ENCODE measurements at regions of chr3 and their contacts with region 1.

Region 1: GRCh38 chr3:142279965-142280590 is 54.7 kb upstream of the GK5 start:
- DNase-seq: peak; percentile 38
- H3K4me3 ChIP-seq: no peak overlapping the region
- H3K27ac ChIP-seq: no peak overlapping the region
- H3K4me1 ChIP-seq: no peaks in the 10 kb centered on the region
- H3K27me3 ChIP-seq: no peaks in the 10 kb centered on the region
- CTCF ChIP-seq: peak; percentile 59 to 78 (median 61)
- EP300 ChIP-seq: no peak
- POLR2A ChIP-seq: no peak

Region 2: DNA sequence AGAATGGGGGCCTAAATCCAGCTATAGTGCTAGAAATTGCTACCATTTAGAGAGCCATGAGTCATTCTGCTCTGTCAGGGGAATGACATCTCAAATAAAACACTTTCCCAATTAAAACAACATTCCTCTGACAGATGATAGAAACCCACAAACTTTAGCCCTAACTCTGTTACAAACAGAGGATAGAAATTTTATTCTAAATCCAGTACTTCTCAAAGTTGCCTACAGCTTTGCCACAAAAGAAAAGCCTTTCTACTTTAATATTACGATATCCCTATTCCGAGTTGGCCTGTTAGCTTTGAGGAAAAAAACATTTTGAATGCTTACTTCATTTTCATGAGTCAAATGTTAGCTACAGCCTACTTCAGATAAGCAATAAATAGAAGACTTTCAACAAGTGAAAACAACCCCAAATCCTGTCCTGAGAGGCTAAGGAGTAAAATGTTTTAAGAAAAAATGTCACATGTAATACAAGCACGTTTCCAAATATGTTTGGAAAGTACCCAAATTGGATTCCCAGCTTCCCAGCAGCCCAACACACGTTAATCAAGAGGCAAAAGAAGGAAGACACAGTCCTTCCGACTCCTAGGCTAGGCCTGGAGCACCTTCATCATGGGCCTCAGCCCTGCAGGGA is 320.0 kb before region 1 on chr3:
- in situ Hi-C with region 1: loop called in 1 of 4 experiments (anchors 10 kb)
- intact Hi-C with region 1: loop called (anchors 10 kb)
- DNase-seq: no peak
- H3K4me3 ChIP-seq: no peak overlapping the region
- H3K27ac ChIP-seq: peak overlapping the region; percentile 33 to 52 (median 42)
- H3K4me1 ChIP-seq: peaks cover 0 to 7% (median 0%) of the 10 kb centered on the region in 4 donors
- H3K27me3 ChIP-seq: no peaks in the 10 kb centered on the region
- CTCF ChIP-seq: no peak
- EP300 ChIP-seq: no peak
- POLR2A ChIP-seq: no peak

Region 3: GRCh38 chr3:142065344-142065743 is 214.7 kb before region 1 on chr3:
- in situ Hi-C with region 1: no loop called
- intact Hi-C with region 1: no loop called
- DNase-seq: no peak
- H3K4me3 ChIP-seq: no peak overlapping the region
- H3K27ac ChIP-seq: no peak overlapping the region
- H3K4me1 ChIP-seq: peaks cover 0 to 3% (median 0%) of the 10 kb centered on the region in 4 donors
- H3K27me3 ChIP-seq: no peaks in the 10 kb centered on the region
- CTCF ChIP-seq: no peak
- EP300 ChIP-seq: no peak
- POLR2A ChIP-seq: no peak

Region 4: DNA sequence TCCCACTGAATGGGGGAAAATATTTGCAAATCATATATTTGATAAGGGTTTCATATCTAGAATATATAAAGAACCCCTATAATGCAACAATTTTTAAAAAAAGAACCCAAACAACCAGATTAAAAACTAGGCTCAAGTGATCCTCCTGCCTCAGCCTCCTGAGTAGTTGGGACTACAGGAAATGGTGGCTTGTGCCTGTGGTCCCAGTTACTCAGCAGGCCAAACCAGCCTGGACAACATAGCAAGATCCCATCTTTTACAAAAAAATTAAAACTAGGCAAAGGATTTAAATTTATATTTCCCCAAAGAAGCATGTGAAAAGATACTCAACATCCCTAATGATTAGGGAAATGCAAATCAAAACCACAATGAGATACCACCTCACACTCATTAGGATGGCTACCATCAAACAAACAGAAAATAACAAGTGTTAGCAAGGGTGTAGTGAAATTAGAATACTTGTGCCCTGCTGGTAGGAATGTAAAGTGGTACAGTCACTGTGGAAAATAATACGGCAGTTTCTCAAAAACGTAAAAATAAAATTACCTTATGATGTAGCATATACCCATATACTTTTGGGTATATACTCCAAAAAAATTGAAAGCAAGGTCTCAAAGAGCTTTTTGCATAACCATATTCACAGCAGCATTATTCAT is 150.4 kb before region 1 on chr3:
- in situ Hi-C with region 1: loop called in 3 of 4 experiments (anchors 10 kb)
- intact Hi-C with region 1: loop called (anchors 10 kb)
- DNase-seq: no peak
- H3K4me3 ChIP-seq: no peak overlapping the region
- H3K27ac ChIP-seq: no peak overlapping the region
- H3K4me1 ChIP-seq: peaks cover 0 to 7% (median 3%) of the 10 kb centered on the region in 4 donors
- H3K27me3 ChIP-seq: no peaks in the 10 kb centered on the region
- CTCF ChIP-seq: peak in 1 of 5 experiments; percentile 8
- EP300 ChIP-seq: no peak
- POLR2A ChIP-seq: no peak

Region 5: DNA sequence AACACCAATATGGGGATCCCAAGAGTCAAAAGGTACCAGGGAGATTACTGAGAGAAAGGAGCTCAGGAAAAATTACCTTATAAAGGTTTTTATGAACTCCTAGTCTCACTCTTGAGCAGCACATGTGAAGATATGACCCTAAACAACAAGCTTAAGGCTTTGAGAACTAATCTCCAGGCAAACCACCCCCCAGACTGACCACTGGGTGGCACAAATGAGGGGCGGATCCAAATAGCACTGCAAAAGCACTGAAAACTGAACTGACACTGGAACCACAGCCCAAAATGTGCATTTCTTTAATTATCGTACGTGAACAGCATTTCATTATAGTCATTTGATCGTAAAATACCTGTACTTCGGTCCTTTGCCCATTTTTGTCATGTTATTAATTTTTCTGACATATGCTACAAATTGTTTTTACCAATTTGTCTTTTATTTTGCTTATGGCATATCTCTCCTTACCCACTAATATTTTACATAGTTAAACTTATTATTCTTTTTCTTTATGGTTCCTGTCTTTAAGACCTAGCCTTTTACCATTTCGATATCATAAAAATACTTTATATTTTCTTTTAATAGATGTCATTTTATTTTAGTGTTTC is 99.2 kb before region 1 on chr3:
- in situ Hi-C with region 1: no loop called
- intact Hi-C with region 1: loop called (anchors 10 kb)
- DNase-seq: peak; percentile 25
- H3K4me3 ChIP-seq: no peak overlapping the region
- H3K27ac ChIP-seq: no peak overlapping the region
- H3K4me1 ChIP-seq: no peaks in the 10 kb centered on the region
- H3K27me3 ChIP-seq: no peaks in the 10 kb centered on the region
- CTCF ChIP-seq: peak; percentile 40 to 48 (median 44)
- EP300 ChIP-seq: no peak
- POLR2A ChIP-seq: no peak

Region 6: DNA sequence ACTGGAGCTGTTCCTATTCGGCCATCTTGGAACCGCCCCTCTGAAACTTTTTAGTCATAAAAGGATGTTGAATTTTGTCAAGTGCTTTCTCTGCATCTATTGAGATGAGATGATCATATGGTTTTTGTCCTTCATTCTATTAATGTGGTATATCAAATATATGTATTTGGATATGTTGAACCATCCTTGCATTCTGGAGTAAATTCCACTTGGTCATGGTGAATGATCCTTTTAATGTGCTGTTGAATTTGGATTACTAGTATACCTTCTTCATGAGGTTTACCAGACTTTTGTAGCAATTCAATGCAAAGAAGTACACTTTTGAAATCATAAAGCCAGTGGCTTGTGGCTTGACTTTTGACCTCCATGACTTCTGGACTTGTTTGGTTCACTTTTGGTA is 201.1 kb after region 1 on chr3:
- in situ Hi-C with region 1: no loop called
- intact Hi-C with region 1: no loop called
- DNase-seq: no peak
- H3K4me3 ChIP-seq: no peak overlapping the region
- H3K27ac ChIP-seq: no peak overlapping the region
- H3K4me1 ChIP-seq: no peaks in the 10 kb centered on the region
- H3K27me3 ChIP-seq: no peaks in the 10 kb centered on the region
- CTCF ChIP-seq: no peak
- EP300 ChIP-seq: no peak
- POLR2A ChIP-seq: no peak

Measured in transverse colon (tissue), 4 donors.